ENCODE measurements at regions of chr5 and their contacts with region 1.

Region 1: DNA sequence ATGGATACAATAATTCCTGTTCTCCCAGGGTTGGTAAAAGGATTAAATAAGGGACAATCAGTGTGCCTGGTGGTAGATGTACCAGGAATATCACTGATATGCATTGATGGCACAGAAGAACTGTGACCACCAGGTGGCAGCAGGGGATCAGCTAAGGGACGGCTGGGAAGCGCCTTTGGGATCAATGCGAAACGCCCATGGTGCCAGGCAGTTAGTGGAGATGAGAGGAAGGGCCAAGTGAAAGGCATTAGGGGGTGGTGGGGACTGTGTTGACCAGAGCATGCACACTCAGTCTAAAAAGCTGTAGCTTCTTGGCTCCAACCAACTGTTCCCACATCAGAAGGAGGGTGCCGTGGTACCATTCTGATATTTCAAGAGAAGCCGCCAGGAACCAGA is 55.6 kb downstream of the ARHGEF37 start:
- DNase-seq: peak in 1 of 2 experiments; percentile 35
- H3K4me3 ChIP-seq: no peak overlapping the region
- H3K27ac ChIP-seq: no peak overlapping the region
- H3K4me1 ChIP-seq: peaks cover 21% of the 10 kb centered on the region
- H3K27me3 ChIP-seq: no peaks in the 10 kb centered on the region
- CTCF ChIP-seq: peak; percentile 88

Region 2: DNA sequence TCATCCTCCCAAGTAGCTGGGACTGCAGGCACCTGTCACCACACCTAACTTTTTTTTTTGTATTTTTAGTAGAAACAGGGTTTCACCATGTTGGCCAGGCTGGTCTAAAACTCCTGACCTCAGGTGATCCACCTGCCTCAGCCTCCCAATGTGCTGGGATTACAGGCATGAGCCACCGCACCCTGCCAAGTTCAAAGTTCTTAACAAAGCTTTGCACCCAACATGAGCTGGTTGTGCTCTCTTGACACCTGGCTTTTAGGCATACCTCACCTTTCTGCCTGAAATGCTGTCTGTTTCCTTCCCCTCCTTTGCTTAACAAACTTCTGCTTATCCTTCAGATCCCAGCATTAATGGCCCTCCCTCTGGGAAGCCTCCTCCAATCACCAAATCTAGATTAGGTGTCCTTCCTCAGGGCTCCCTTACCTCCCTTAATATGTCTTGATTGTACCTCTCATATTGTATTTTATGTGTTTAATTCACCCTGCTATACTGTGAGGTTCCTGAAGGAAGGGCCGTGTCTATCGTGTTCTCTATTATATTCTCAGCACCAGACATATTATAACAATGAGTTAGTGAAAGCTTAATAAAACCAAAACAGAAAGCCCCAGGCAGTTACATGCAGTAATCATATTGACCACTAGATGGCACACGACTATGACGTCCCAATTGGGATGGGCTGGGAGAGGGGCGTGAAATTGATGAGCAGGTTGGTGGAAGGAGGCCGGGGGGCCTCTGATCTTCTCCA is 30.4 kb after region 1 on chr5:
- CTCF ChIA-PET with region 1: interaction called, 4 read pairs
- POLR2A ChIA-PET with region 1: no interaction called
- intact Hi-C with region 1: loop called (anchors 1 kb)
- DNase-seq: peak in 1 of 2 experiments; percentile 18
- H3K4me3 ChIP-seq: no peak overlapping the region
- H3K27ac ChIP-seq: no peak overlapping the region
- H3K4me1 ChIP-seq: no peaks in the 10 kb centered on the region
- H3K27me3 ChIP-seq: no peaks in the 10 kb centered on the region
- CTCF ChIP-seq: peak; percentile 92

Region 3: DNA sequence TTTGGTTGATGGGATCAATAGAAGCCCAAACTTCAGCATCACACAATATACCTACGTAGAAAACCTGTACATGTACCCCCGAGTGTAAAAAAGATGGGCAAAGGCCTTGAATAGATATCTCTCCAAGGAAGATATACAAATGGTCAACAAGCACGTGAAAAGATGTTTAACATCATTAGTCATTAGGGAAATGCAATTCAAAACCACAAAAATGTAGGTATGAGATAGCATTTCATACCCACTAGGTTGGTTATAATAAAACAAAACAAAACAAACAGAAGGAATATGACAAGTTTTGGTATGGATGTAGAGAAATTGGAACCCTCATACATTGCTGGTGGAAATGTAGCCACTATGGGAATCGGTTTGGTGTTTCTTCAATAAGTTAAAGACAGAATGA is 60.2 kb after region 1 on chr5:
- CTCF ChIA-PET with region 1: no interaction called
- POLR2A ChIA-PET with region 1: no interaction called
- intact Hi-C with region 1: no loop called
- DNase-seq: peak in 1 of 2 experiments; percentile 75
- H3K4me3 ChIP-seq: no peak overlapping the region
- H3K27ac ChIP-seq: no peak overlapping the region
- H3K4me1 ChIP-seq: peaks cover 11% of the 10 kb centered on the region
- H3K27me3 ChIP-seq: peaks cover 26% of the 10 kb centered on the region
- CTCF ChIP-seq: no peak

Region 4: DNA sequence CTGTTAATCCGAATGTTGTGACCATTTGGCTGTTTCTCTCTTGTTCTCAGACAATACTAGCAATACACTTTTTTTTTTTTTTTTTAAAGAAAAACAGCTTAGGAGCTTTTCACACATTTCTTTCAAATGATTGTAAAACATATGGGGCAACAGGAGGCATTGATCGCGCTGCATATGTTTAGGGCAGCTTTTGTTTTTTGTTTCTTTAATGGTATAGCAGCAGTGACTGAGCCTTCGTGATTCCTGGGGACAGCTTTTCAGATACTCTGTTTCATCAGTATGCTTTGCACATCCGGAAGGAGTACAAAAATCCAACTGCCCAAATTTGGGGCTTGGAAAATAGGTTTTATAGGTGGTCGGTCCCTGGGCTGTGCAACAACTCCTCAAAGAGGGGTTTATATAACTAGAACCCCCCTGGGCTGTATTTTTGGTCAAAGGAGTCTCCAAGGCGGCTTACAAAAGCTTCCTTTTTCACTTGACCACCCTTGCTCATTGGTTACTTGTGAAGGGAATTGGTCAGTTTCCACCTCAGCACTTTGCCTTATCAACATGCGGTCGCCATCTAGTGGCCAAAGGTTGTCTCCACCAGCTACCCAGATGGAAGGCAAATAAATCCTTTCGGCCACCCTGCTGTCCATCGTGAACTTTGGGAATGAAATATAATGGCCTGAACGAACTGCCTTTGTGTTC is 215.9 kb after region 1 on chr5:
- CTCF ChIA-PET with region 1: interaction called, 7 read pairs
- POLR2A ChIA-PET with region 1: interaction called, 3 read pairs
- intact Hi-C with region 1: loop called (anchors 1 kb)
- DNase-seq: peak; percentile 50 to 71
- H3K4me3 ChIP-seq: no peak overlapping the region
- H3K27ac ChIP-seq: no peak overlapping the region
- H3K4me1 ChIP-seq: no peaks in the 10 kb centered on the region
- H3K27me3 ChIP-seq: no peaks in the 10 kb centered on the region
- CTCF ChIP-seq: peak; percentile 89

Region 5: GRCh38 chr5:150112261-150113046 is 475.6 kb after region 1 on chr5:
- CTCF ChIA-PET with region 1: no interaction called
- POLR2A ChIA-PET with region 1: no interaction called
- intact Hi-C with region 1: loop called (anchors 10 kb)
- DNase-seq: peak; percentile 72 to 76
- H3K4me3 ChIP-seq: no peak overlapping the region
- H3K27ac ChIP-seq: peak overlapping the region; percentile 80
- H3K4me1 ChIP-seq: peaks cover 51% of the 10 kb centered on the region
- H3K27me3 ChIP-seq: no peaks in the 10 kb centered on the region
- CTCF ChIP-seq: no peak

Region 6: GRCh38 chr5:150357326-150358260 is 720.7 kb after region 1 on chr5 and contains the start of gene TCOF1:
- CTCF ChIA-PET with region 1: no interaction called
- POLR2A ChIA-PET with region 1: no interaction called
- intact Hi-C with region 1: loop called (anchors 10 kb)
- DNase-seq: peak; percentile 84 to 99
- H3K4me3 ChIP-seq: peak within 1 kb of the TSS; percentile 92
- H3K27ac ChIP-seq: peak within 1 kb of the TSS; percentile 45
- H3K4me1 ChIP-seq: peaks cover 13% of the 10 kb centered on the region
- H3K27me3 ChIP-seq: no peaks in the 10 kb centered on the region
- CTCF ChIP-seq: no peak
- total RNA-seq, gene TCOF1: 68.4 and 75.3 TPM in 2 replicates